ENCODE measurements at regions of chr4 and their contacts with region 1.

Region 1: DNA sequence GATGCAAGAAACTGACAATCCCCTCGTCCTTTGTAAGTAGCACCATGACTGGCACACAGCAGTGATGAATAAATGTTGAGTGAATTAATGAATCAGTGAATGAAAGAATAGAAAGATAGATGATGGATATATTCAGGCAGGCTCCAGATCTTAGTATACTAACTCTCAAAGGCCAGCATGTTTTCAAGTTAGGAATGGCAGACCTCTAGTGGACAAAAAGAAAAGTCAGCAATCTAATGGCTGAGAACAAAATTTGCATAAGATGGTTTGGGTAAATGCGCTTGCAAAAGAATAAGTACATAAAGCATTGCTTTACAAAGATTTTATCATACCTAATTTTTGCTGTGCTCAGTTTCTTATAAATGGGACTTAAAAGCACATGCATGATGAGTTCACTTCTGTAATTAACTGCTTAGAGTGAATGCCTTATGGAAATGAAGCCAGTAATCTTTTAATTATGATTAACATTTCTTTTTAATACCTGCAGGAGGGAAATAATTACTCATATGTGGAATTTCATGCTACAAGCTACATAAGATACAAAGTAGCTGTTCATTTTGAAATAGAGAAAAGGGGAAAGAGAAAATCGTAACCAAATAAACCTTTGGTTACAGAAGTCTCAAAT is 126.9 kb upstream of the GPRIN3 start:
- DNase-seq: no peak
- H3K4me3 ChIP-seq: no peak overlapping the region
- H3K27ac ChIP-seq: no peak overlapping the region
- H3K4me1 ChIP-seq: no peaks in the 10 kb centered on the region
- H3K27me3 ChIP-seq: no peaks in the 10 kb centered on the region
- CTCF ChIP-seq: peak; percentile 35 to 79 (median 67)
- POLR2A ChIP-seq: no peak

Region 2: DNA sequence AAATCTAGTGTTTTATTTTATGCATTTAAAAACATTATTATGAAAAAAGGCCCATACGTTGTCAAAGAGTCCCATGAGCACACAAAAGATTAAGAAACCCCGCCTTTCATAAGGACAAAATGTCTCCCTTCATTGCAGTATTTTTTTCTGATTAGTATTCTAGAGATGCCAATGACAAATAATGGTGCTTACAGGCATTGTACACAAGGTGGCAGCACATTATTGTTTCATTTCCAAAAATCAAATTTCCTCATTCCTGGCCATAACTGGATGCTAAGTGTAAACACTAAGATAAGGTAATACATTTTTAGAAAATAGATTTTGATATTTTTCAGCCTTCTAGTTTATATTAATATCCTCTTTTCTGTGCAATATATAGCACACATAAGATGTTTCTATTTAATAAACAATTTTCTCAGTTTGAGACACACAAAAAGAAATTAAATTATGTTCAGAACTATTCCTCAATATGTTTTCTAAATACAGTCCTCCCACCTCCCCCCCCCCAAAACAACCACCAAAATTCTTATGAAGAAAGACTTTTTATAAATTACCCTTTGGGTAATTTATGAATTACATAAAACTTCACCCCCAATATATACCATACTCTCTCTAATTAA is 275.5 kb before region 1 on chr4:
- intact Hi-C with region 1: loop called (anchors 10 kb)
- DNase-seq: no peak
- H3K4me3 ChIP-seq: no peak overlapping the region
- H3K27ac ChIP-seq: no peak overlapping the region
- H3K4me1 ChIP-seq: no peaks in the 10 kb centered on the region
- H3K27me3 ChIP-seq: no peaks in the 10 kb centered on the region
- CTCF ChIP-seq: peak; percentile 22 to 78 (median 68)
- POLR2A ChIP-seq: no peak

Region 3: DNA sequence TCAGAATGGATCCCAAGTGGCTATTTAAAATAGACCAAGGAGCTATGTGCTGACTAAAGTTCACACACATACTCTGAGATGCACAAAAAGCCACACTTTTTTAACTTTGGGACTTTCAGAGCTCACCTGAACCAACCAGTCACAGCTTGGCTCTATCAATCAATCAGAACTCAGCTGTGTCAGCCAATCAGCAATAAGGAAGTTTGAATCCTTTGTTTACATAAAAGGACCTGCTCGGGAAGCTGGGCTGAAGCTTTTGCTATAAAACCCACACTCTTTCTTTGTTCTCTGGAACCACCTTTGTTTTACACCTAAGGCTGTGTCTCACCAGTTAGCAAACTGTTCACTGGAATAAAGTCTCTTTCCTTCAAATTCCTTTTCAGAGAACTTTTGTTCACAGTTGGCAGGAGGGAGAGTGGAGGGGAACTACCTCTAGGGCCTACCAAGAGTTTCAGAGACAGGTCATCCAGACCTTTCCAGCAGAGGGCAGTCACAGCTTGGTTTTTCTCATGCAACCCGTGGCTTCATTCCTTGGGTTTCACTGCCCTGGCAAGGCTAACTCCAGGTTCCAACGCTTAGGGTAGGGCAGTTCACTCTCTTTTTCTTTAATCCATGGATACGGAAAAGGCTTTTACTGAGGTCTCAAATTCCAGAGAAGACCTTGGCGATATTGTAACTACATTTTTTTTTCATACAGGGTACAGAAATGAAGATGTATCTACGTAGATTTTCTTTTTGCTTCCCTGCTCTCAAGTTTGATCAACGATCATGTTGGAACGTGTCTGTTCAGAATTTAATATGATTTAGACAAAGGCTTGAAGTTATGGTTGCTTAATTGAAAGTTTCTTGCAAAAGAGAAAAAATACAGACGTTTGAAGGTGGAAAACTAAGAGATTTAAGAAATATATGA is 207.6 kb before region 1 on chr4:
- intact Hi-C with region 1: loop called (anchors 2 kb)
- DNase-seq: peak; percentile 87
- H3K4me3 ChIP-seq: no peak overlapping the region
- H3K27ac ChIP-seq: no peak overlapping the region
- H3K4me1 ChIP-seq: no peaks in the 10 kb centered on the region
- H3K27me3 ChIP-seq: no peaks in the 10 kb centered on the region
- CTCF ChIP-seq: peak; percentile 28 to 85 (median 76)
- POLR2A ChIP-seq: no peak

Region 4: DNA sequence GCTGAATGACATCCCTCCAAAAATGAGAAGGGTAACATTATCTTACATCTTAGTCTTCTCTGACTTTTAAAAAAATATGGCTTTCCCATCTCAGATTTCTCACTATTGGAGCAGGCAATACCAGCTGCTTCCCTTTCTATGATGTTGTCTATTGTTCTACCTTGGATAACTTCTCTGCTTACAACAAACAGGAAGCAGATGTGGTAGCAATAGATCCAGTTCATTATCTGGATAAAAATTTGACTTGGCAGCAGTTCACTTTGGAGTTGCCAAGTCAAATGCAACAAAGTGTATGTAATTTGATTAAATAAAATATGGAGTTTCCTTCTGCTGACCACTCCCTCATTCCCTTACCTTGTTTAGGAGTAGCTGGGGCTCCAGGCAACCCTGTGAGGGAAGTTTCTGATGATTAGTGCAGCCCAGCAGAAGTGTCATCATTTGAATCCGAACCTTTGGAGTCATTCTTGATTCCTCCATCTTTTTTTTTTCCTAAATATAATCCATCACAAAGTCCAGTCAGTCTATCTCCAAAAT is 54.9 kb before region 1 on chr4:
- intact Hi-C with region 1: no loop called
- DNase-seq: no peak
- H3K4me3 ChIP-seq: no peak overlapping the region
- H3K27ac ChIP-seq: no peak overlapping the region
- H3K4me1 ChIP-seq: no peaks in the 10 kb centered on the region
- H3K27me3 ChIP-seq: no peaks in the 10 kb centered on the region
- CTCF ChIP-seq: no peak
- POLR2A ChIP-seq: no peak

Region 5: GRCh38 chr4:89737888-89738287 is 303.4 kb after region 1 on chr4:
- intact Hi-C with region 1: no loop called
- DNase-seq: no peak
- H3K4me3 ChIP-seq: no peak overlapping the region
- H3K27ac ChIP-seq: no peak overlapping the region
- H3K4me1 ChIP-seq: no peaks in the 10 kb centered on the region
- H3K27me3 ChIP-seq: no peaks in the 10 kb centered on the region
- CTCF ChIP-seq: no peak
- POLR2A ChIP-seq: no peak

Region 6: DNA sequence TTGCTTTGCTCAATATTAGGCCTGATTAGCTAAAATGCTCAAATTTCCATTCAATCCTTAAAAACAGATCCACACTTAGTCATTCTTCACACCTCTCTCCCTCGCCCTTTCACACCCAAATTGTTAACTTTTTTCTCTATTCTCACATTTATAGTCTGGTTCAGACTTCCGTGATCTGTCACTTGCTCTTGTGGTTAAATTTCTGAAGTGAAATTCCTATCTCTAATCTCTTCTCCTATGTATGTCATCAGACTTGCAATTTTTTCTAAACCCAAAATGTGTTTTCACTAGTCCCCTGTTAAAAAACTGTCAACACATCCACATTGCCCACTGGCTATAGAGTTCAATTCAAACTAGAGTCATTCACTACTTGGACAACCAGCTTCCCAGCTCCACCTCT is 339.3 kb after region 1 on chr4:
- intact Hi-C with region 1: no loop called
- DNase-seq: no peak
- H3K4me3 ChIP-seq: no peak overlapping the region
- H3K27ac ChIP-seq: no peak overlapping the region
- H3K4me1 ChIP-seq: no peaks in the 10 kb centered on the region
- H3K27me3 ChIP-seq: no peaks in the 10 kb centered on the region
- CTCF ChIP-seq: no peak
- POLR2A ChIP-seq: no peak